ENCODE measurements at regions of chr14 and their contacts with region 1.

Region 1: DNA sequence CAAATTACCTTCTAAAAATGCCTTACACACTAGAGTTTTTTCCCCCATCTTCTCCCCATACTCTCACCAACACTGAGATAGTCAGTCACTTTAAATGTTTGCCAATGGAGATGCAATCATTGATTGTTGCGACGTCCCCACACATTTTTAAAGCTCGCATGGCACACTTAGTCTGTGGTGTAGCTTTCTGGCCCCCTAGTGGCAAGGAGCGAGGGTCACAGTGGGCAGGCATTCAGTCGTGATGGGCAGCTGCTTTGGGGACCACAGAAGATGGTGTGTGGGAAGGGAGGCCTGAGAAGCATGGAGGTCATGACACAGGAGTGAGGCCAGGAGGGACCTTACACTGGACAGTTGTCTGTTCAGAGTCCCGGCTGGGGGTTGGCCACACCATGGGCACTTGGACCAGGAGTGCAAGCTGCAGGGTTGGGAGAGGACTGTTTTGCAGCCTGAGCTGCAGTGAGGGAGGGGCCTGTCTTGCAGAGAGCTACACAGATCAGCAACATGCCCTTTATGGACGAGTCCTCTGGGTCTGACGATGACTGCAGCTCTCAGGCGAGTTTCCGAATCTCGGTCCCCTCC is 28.7 kb downstream of the PIGH start:
- H3K4me3 Mint-ChIP-seq: no peak overlapping the region
- H3K27ac Mint-ChIP-seq: no peak overlapping the region
- H3K4me1 Mint-ChIP-seq: peaks cover 26% of the 10 kb centered on the region
- H3K27me3 Mint-ChIP-seq: peaks cover 39% of the 10 kb centered on the region

Region 2: DNA sequence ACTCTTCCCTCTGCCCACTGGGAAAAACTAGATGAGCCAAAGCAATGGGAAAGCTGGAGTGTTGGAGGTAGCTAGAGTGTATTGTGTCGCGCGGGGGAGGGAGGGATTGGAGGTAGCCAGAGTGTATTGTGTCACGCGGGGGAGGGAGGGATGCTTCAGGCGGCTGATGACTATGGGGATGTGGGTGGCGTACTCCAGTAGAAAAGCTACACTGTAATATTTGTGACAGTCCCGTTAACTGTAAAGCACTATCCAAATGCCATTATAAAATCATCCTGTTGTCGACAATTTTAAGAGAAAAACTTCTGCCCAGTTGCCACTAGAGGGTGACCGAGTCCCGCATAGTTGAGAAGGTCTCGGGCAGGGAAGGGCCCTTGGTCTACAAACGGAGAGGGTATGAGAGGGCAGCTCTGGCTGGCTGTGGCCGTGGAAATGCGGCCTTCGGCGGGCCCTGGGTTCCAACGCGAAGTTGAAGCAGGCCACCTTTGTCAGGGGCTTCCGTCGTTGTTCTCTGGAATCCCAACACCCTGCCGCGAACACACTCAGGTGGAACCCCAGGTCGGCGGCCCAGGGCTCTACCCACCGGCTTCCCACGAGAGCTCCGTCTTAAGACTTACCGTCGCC is 144.3 kb before region 1 on chr14:
- intact Hi-C with region 1: loop called (anchors 1 kb)
- H3K4me3 Mint-ChIP-seq: no peak overlapping the region
- H3K27ac Mint-ChIP-seq: no peak overlapping the region
- H3K4me1 Mint-ChIP-seq: peaks cover 18% of the 10 kb centered on the region
- H3K27me3 Mint-ChIP-seq: peaks cover 43% of the 10 kb centered on the region

Region 3: GRCh38 chr14:67477926-67478799 is 93.2 kb before region 1 on chr14:
- intact Hi-C with region 1: no loop called
- H3K4me3 Mint-ChIP-seq: no peak overlapping the region
- H3K27ac Mint-ChIP-seq: no peak overlapping the region
- H3K4me1 Mint-ChIP-seq: peaks cover 30% of the 10 kb centered on the region
- H3K27me3 Mint-ChIP-seq: no peaks in the 10 kb centered on the region

Region 4: DNA sequence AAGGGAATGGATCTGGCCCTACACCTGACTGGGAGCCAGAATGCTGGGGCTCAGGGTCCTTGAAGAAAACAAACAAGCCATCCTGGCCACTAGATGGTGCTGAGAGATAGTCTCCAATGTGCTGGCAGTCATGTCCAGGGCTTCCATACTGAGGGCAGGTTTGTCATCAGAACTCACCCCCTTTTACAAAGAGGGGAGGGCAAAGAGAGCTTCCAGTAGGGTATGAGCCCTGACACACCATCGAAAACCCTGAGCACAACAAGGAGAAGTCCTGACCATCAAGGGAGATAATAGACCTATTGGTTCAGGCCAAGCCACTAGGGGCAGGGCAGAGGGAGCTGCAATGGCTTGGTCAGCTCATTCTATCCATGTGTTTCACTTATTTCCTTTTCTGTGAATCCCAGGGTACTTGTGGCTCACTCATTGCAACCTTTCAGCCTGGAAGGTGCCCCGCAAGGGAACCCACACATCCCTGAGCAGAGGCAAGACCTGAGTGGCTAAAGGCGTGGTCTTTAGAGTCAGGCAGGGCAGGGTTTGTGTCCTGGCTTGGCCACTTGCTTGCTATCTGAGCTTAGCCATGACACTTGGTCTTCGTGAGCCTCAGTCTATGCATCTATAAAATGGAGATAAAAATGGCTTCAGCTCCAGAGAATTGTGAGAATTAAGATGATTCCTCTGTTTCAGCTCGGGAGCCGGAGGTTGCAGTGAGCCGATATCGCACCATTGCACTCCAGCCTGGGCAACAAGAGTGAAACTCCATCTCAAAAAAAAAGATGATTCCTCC is 44.5 kb before region 1 on chr14:
- intact Hi-C with region 1: loop called (anchors 2 kb)
- H3K4me3 Mint-ChIP-seq: no peak overlapping the region
- H3K27ac Mint-ChIP-seq: no peak overlapping the region
- H3K4me1 Mint-ChIP-seq: peaks cover 20% of the 10 kb centered on the region
- H3K27me3 Mint-ChIP-seq: peaks cover 70% of the 10 kb centered on the region